Activated CD8-positive, alpha-beta T cell treated with anti-CD3 and anti-CD28 coated beads, Interleukin-2, amount 10 ng/mL, durations not matched to agents 7 days and 5 days (primary cell): ENCODE measurements at regions of chr1 and their contacts with region 1.

Region 1: GRCh38 chr1:235011599-235012435 is 116.8 kb downstream of the TOMM20 start:
- DNase-seq: peak; percentile 98
- ATAC-seq: peak; percentile 97
- H3K4me3 Mint-ChIP-seq: peak overlapping the region; percentile 74
- H3K27ac Mint-ChIP-seq: peak overlapping the region; percentile 99
- H3K4me1 Mint-ChIP-seq: peaks cover 86% of the 10 kb centered on the region
- H3K27me3 Mint-ChIP-seq: no peaks in the 10 kb centered on the region

Region 2: DNA sequence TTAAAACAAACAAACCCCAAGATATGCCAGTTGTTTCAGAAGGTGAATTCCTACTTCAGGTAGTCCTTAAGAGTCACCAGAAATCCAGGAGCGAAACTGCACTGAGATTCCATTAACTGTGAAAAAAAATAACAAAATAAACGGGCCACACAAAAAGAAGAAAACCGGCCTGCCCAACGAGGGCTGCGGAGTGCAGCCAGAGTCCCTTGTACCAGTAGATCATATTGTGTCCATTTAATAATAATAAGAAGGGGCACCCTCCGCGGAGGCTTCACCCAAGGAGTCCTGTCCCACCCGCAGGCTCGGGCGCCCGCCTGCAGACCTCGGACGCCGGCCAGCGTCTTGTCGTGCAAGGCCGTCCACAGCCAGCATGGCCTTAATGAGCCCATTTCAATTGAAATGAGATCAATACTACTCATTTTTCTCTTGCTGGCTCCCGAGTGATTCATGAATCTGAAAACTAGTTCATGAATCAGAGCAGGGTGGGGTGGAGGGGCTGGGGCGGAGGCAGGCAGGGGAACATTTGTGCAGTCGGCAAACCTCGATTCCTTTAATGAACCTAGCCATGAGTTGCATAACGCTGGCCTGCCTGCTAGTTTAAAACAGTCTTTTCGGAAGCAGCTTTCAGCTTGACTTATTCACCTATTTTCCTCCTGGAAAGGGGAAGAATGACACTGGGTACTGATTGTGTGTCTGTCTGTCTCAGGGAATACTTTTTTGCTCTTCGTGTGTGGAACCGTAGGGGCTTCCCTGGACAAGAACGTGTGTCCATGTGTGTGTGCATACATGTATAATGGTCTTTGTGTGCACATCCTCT is 288.7 kb before region 1 on chr1:
- CTCF ChIA-PET with region 1: interaction called, 3 read pairs
- POLR2A ChIA-PET with region 1: interaction called, 22 read pairs
- DNase-seq: peak; percentile 47
- ATAC-seq: no peak
- H3K4me3 Mint-ChIP-seq: peak overlapping the region; percentile 66
- H3K27ac Mint-ChIP-seq: peak overlapping the region; percentile 93
- H3K4me1 Mint-ChIP-seq: peaks cover 70% of the 10 kb centered on the region
- H3K27me3 Mint-ChIP-seq: no peaks in the 10 kb centered on the region

Region 3: GRCh38 chr1:234963180-234963903 is 48.5 kb before region 1 on chr1:
- CTCF ChIA-PET with region 1: interaction called, 9 read pairs
- POLR2A ChIA-PET with region 1: interaction called, 14 read pairs
- DNase-seq: peak; percentile 94
- ATAC-seq: peak; percentile 84
- H3K4me3 Mint-ChIP-seq: peak overlapping the region; percentile 66
- H3K27ac Mint-ChIP-seq: peak overlapping the region; percentile 93
- H3K4me1 Mint-ChIP-seq: peaks cover 71% of the 10 kb centered on the region
- H3K27me3 Mint-ChIP-seq: no peaks in the 10 kb centered on the region

Region 4: DNA sequence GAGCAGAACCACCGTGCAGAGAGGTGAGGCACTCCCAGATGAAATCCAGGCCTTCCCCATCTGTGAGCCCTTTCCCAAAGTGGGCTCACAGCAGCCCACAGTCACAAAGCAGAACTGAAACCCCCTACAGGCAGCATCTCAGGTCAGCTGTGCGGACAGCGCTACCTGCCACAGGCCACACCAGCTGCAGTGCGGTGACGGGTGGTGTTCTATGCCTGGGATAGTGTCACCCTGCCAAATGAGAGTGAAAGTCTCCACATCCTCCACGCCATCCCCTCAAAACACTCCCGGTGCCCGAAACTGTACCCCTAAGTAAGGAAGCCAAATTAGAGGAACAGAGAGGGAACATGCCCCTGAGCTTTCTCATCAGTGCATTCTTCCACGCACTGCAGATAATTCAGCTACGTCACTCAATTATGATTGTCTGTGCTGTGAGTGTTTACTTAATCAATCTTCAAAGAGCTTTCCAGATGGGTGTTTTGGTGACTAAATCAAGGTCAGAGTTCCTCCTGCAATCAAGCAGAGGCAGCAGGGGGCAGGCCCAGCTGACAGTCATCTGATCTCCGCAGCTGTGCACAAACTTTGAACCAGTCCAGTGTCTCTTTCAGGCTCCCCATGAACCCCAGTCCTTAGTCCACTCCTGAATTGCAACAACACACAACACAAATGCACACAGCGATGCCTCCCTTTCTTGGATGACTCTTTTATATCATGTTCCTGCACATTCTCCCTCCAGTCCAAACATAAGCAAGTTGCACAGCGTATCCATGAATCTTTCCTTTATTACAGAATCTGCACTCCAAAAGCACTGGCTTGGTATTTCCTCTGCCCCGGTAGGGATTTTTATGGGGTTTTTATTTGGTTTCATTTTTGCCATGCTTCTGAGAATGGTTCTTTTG is 33.2 kb before region 1 on chr1:
- CTCF ChIA-PET with region 1: interaction called, 4 read pairs
- POLR2A ChIA-PET with region 1: interaction called, 56 read pairs
- DNase-seq: peak; percentile 54
- ATAC-seq: peak; percentile 9
- H3K4me3 Mint-ChIP-seq: peak overlapping the region; percentile 5
- H3K27ac Mint-ChIP-seq: peak overlapping the region; percentile 91
- H3K4me1 Mint-ChIP-seq: peaks cover 72% of the 10 kb centered on the region
- H3K27me3 Mint-ChIP-seq: no peaks in the 10 kb centered on the region

Region 5: DNA sequence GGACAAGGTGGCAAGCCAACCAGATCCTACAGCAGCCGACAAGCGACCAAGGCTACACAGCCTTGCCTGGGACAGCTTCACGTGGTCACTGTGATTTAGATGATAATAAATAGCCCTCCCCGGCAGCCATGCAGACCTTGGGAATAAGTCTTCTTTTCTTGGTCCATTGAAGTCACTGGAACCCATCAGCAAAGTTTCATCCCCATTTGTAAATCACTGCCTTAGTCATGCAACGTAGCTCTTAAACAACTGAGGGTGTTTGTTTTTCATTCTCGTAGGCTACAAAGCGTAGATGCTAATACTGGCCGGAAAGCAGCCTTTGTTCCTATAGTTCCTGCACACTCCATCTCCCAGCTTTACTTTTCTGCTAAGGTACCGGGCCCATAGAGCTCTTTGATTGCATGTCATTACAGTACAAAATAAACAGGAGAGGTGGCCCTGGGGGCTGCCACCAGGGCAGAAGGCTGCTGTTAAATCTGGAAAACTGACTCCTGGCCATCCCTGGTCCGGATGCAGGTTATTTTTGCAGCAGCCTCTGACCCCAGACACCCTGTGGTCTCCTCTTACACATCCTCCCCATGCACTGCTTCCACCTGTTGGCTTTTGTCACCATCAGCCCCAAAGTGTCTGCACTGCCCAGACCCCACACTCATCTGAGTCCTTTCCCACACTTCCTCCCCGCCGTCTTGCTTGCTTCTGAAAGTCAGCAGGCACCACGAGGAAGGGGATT is 11.3 kb after region 1 on chr1:
- CTCF ChIA-PET with region 1: interaction called, 5 read pairs
- POLR2A ChIA-PET with region 1: interaction called, 23 read pairs
- DNase-seq: no peak
- ATAC-seq: no peak
- H3K4me3 Mint-ChIP-seq: no peak overlapping the region
- H3K27ac Mint-ChIP-seq: no peak overlapping the region
- H3K4me1 Mint-ChIP-seq: peaks cover 51% of the 10 kb centered on the region
- H3K27me3 Mint-ChIP-seq: no peaks in the 10 kb centered on the region